ENCODE measurements at regions of chr18 and their contacts with region 1.

Region 1: DNA sequence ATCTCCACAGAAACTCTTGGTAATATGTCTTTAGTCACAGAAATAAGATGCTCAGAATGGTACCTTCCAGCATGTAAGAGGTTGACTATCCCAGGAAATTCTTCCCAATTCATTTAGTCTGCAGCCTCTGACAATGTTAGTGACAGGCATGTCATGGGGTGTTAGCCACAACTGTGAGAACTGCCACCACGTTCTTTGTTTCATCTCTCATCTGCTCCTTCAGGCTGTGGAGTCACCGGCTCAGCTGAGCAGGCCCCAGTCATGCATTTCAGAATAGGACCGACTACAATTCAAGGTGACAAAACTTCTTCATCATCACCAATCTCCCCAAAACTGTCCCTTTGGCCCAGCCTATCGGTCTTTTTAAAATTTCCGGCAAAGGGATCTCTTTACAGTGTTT is 167.5 kb downstream of the AKAIN1 start:
- DNase-seq: no peak
- H3K4me3 Mint-ChIP-seq: no peak overlapping the region
- H3K27ac Mint-ChIP-seq: no peak overlapping the region
- H3K4me1 Mint-ChIP-seq: no peaks in the 10 kb centered on the region
- H3K27me3 Mint-ChIP-seq: no peaks in the 10 kb centered on the region
- CTCF ChIP-seq: no peak

Region 2: DNA sequence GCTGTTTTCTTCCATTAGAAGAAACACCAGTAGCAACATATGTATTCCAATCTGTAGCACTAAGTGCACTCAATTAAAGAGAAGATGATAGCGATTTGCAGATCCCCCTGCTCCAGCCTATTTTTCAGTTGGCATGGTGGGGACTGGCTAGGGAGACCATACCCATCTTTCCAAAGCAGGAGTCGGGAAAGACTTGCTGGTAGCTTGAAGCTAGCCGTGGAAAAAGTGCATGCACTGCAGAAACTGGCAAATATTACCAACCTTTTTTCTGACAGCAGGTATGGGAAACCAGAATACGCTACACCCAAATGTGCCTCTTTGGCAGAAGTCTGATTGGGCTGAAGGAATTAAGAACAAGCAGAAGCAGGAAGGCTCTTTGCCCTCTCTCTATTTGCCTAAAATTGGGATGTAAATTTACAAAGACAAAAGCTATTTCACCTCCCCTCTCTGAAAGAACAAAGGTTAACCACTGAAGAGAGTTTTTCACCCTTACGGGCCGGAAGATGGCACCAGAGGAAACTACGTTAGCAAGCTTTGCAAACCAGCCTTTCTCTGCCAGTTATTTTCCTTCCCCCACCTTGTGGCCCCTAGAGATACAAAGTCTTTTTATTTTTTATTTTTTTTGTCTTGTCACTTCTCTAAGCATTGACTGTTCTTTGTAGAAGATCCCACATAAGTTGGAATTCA is 847.6 kb before region 1 on chr18:
- CTCF ChIA-PET with region 1: no interaction called
- intact Hi-C with region 1: loop called (anchors 10 kb)
- DNase-seq: no peak
- H3K4me3 Mint-ChIP-seq: no peak overlapping the region
- H3K27ac Mint-ChIP-seq: no peak overlapping the region
- H3K4me1 Mint-ChIP-seq: no peaks in the 10 kb centered on the region
- H3K27me3 Mint-ChIP-seq: no peaks in the 10 kb centered on the region
- CTCF ChIP-seq: no peak

Region 3: GRCh38 chr18:4704781-4705180 is 324.8 kb before region 1 on chr18:
- CTCF ChIA-PET with region 1: no interaction called
- intact Hi-C with region 1: loop called (anchors 10 kb)
- DNase-seq: no peak
- H3K4me3 Mint-ChIP-seq: no peak overlapping the region
- H3K27ac Mint-ChIP-seq: no peak overlapping the region
- H3K4me1 Mint-ChIP-seq: no peaks in the 10 kb centered on the region
- H3K27me3 Mint-ChIP-seq: no peaks in the 10 kb centered on the region
- CTCF ChIP-seq: no peak